ENCODE measurements at regions of chr14 and their contacts with region 1.

Region 1: DNA sequence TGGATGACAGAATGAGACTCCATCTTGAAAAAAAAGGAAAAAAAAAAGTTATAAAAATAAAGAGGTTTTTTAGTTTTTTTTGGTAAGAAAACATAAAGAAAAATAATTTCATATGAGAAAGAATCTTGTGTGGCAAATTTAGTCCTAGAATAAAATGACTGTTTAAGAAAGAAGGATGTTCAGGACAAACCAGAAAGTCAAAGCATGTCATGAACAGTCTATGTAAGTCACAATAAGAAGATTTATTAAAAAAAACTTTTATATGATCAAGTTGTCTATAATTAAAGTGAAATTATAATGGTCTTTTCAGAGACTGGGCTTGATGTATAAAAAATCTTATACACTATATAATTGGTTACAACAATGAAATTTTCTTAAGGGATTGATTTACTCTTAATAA is 68.1 kb upstream of the HECTD1 start:
- DNase-seq: no peak
- CTCF ChIP-seq: no peak

Region 2: GRCh38 chr14:30988509-30988908 is 287.2 kb before region 1 on chr14:
- CTCF ChIA-PET with region 1: no interaction called
- POLR2A ChIA-PET with region 1: no interaction called
- DNase-seq: no peak
- CTCF ChIP-seq: no peak

Region 3: DNA sequence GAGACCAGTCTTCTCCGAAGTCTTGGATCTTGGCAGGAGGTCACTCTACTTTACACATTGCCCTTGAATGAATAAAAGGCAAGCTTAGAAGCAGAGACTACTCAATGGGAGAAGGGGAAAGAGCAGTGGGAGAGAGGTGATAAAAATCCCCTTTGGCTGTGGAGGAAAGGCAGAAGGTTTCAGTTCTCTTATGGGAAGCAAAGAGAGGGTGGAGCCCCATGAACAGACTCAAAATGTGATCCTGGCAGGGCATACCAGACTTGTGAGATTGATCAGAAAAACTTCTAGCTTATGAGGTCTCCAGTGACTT is 18.5 kb before region 1 on chr14:
- CTCF ChIA-PET with region 1: interaction called, 12 read pairs
- POLR2A ChIA-PET with region 1: no interaction called
- DNase-seq: no peak
- CTCF ChIP-seq: no peak